ENCODE measurements at regions of chr1 and their contacts with region 1.

Region 1: DNA sequence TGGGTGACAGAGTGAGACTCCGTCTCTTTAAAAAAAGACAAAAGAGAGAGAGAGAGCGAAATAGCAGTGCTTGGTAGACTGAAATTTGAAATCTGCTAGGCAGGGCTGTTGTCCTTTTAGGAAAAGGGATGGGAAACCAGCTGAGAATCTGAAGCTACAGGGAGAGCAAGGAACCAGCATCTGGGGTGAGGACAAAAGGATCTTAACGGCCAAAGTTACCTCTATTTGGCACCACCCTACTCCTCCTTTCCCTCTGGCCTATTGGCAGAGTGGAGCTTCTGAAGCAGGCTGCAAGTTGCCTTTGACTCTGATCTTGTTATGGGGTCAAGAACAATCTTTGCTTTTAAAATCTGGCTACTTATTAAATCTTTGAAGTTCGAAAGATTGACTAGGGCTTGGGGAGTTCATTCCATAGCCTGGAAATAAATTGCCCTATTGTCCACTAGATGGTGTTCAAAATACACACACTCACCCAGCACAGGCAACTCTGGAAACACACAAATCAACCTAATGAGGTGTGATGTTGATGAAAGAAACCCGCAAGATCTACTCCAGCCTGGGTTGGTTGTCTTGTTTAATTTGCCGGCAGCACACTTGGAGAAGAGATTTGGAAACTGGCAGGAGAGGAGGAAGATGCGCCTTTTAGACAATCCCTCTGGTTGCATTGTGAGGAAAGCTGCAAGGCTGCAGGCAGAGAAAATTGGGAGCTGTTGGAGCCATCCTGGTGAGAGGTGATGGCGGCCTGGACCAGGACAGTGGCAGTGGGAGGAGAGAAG is 16.5 kb upstream of the PARP1 start:
- DNase-seq: peak in 2 of 5 donors; percentile 20 to 41
- H3K4me3 ChIP-seq: no peak overlapping the region
- H3K4me3 Mint-ChIP-seq: no peak overlapping the region
- H3K27ac ChIP-seq: no peak overlapping the region
- H3K27ac Mint-ChIP-seq: no peak overlapping the region
- H3K4me1 ChIP-seq: peaks cover 14% of the 10 kb centered on the region
- H3K4me1 Mint-ChIP-seq: peaks cover 12 to 26% (median 17%) of the 10 kb centered on the region in 3 donors
- H3K27me3 ChIP-seq: no peaks in the 10 kb centered on the region
- H3K27me3 Mint-ChIP-seq: no peaks in the 10 kb centered on the region

Region 2: DNA sequence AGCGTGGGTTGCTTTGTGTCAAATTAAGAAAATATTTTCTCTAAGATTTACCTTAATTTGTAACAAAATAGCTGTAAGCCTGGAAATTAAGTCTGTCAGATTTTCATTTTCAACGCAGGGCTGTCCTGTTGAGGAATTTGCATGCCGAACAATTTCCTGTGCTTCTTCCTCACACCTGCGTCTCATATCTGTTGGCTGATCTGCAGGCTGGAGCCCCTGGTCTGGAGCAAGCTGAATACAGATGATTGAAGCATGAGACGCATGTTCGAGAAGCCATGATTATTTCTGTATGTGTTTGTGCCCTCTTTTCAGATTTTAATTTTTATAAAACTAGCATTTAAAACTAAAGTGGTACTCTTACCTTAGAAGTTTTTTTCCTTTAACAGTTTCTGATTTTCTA is 191.1 kb before region 1 on chr1:
- CTCF ChIA-PET with region 1: no interaction called
- POLR2A ChIA-PET with region 1: no interaction called
- DNase-seq: no peak
- H3K4me3 ChIP-seq: no peak overlapping the region
- H3K4me3 Mint-ChIP-seq: no peak overlapping the region
- H3K27ac ChIP-seq: no peak overlapping the region
- H3K27ac Mint-ChIP-seq: no peak overlapping the region
- H3K4me1 ChIP-seq: no peaks in the 10 kb centered on the region
- H3K4me1 Mint-ChIP-seq: no peaks in the 10 kb centered on the region
- H3K27me3 ChIP-seq: no peaks in the 10 kb centered on the region
- H3K27me3 Mint-ChIP-seq: no peaks in the 10 kb centered on the region

Region 3: GRCh38 chr1:226444901-226445300 is 20.5 kb after region 1 on chr1:
- CTCF ChIA-PET with region 1: interaction called, 77 read pairs
- POLR2A ChIA-PET with region 1: interaction called, 9 read pairs
- DNase-seq: peak; percentile 27 to 85 (median 78)
- H3K4me3 ChIP-seq: no peak overlapping the region
- H3K4me3 Mint-ChIP-seq: peak overlapping the region in 6 of 7 donors; percentile 2 to 84 (median 60)
- H3K27ac ChIP-seq: no peak overlapping the region
- H3K27ac Mint-ChIP-seq: peak overlapping the region; percentile 5 to 94 (median 88)
- H3K4me1 ChIP-seq: peaks cover 33% of the 10 kb centered on the region
- H3K4me1 Mint-ChIP-seq: peaks cover 26 to 33% (median 29%) of the 10 kb centered on the region in 3 donors
- H3K27me3 ChIP-seq: no peaks in the 10 kb centered on the region
- H3K27me3 Mint-ChIP-seq: no peaks in the 10 kb centered on the region

Region 4: GRCh38 chr1:226457307-226457712 is 32.9 kb after region 1 on chr1:
- CTCF ChIA-PET with region 1: interaction called, 15 read pairs
- POLR2A ChIA-PET with region 1: interaction called, 7 read pairs
- DNase-seq: peak; percentile 48 to 72 (median 65)
- H3K4me3 ChIP-seq: peak overlapping the region; percentile 19
- H3K4me3 Mint-ChIP-seq: peak overlapping the region; percentile 67 to 94 (median 89)
- H3K27ac ChIP-seq: no peak overlapping the region
- H3K27ac Mint-ChIP-seq: peak overlapping the region; percentile 57 to 95 (median 90)
- H3K4me1 ChIP-seq: peaks cover 8% of the 10 kb centered on the region
- H3K4me1 Mint-ChIP-seq: peaks cover 15 to 21% (median 17%) of the 10 kb centered on the region in 3 donors
- H3K27me3 ChIP-seq: no peaks in the 10 kb centered on the region
- H3K27me3 Mint-ChIP-seq: peaks cover 0 to 3% of the 10 kb centered on the region in 2 donors

Region 5: GRCh38 chr1:226547754-226548191 is 123.4 kb after region 1 on chr1:
- CTCF ChIA-PET with region 1: interaction called, 34 read pairs
- POLR2A ChIA-PET with region 1: interaction called, 5 read pairs
- DNase-seq: peak; percentile 26 to 72 (median 40)
- H3K4me3 ChIP-seq: no peak overlapping the region
- H3K4me3 Mint-ChIP-seq: peak overlapping the region in 6 of 7 donors; percentile 23 to 60 (median 50)
- H3K27ac ChIP-seq: no peak overlapping the region
- H3K27ac Mint-ChIP-seq: peak overlapping the region in 1 of 8 donors; percentile 30
- H3K4me1 ChIP-seq: peaks cover 18% of the 10 kb centered on the region
- H3K4me1 Mint-ChIP-seq: peaks cover 14 to 23% (median 20%) of the 10 kb centered on the region in 3 donors
- H3K27me3 ChIP-seq: peaks cover 28% of the 10 kb centered on the region
- H3K27me3 Mint-ChIP-seq: peaks cover 30 to 48% of the 10 kb centered on the region in 2 donors

Region 6: GRCh38 chr1:226608699-226609505 is 184.5 kb after region 1 on chr1:
- CTCF ChIA-PET with region 1: interaction called, 17 read pairs
- POLR2A ChIA-PET with region 1: no interaction called
- DNase-seq: peak; percentile 52 to 78 (median 61)
- H3K4me3 ChIP-seq: no peak overlapping the region
- H3K4me3 Mint-ChIP-seq: peak overlapping the region in 1 of 7 donors; percentile 43
- H3K27ac ChIP-seq: no peak overlapping the region
- H3K27ac Mint-ChIP-seq: peak overlapping the region in 1 of 8 donors; percentile 13
- H3K4me1 ChIP-seq: no peaks in the 10 kb centered on the region
- H3K4me1 Mint-ChIP-seq: no peaks in the 10 kb centered on the region
- H3K27me3 ChIP-seq: no peaks in the 10 kb centered on the region
- H3K27me3 Mint-ChIP-seq: peaks cover 8 to 10% of the 10 kb centered on the region in 2 donors

Measured in CD8-positive, alpha-beta memory T cell (primary cell).